ENCODE measurements at regions of chr4 and their contacts with region 1.

Region 1: DNA sequence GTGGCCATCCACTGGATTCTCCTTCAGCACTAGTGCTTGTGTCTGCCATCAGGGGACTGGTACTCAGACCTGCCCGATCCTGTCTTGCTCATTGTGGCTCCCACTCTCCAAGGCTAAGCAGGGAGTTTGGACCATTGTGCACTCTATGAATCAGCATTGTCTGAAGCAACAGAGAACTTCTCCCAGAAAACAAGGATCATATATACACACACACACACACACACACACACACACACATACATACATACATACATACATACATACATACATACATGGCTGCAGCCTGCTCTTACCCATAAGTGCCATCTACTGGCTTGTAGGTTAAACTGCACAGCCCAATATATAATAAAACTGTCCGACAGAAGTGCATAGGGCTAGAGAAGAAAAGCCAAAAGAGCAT is 345.3 kb upstream of the LCORL start:
- DNase-seq: no peak
- H3K4me3 ChIP-seq: no peak overlapping the region
- H3K27ac ChIP-seq: no peak overlapping the region
- H3K4me1 ChIP-seq: no peaks in the 10 kb centered on the region
- H3K27me3 ChIP-seq: no peaks in the 10 kb centered on the region
- CTCF ChIP-seq: peak; percentile 66

Region 2: DNA sequence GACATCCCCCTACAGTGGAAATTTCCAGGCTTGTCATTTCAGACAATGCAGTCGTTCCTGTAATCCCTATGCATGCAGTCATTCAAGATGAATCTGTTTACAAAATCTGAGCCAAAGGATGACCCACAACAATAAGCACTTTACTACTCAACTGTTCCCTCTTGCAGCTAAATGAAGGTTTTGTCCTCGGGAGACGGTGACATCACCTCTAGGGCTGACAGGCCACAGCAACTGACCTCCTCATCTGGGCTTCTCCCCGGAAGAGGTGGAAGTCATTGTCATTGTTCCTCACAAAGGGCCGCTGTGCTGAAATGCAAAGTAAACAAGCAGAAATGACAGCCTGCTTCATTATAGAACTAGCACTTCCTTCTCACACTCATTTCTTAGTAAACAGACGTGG is 822.7 kb before region 1 on chr4:
- CTCF ChIA-PET with region 1: no interaction called
- POLR2A ChIA-PET with region 1: no interaction called
- intact Hi-C with region 1: loop called (anchors 5 kb)
- DNase-seq: peak in 1 of 2 experiments; percentile 46
- H3K4me3 ChIP-seq: no peak overlapping the region
- H3K27ac ChIP-seq: no peak overlapping the region
- H3K4me1 ChIP-seq: 0 out of 2 replicates have a peak, but pooled peaks cover 3% of the 10 kb centered on the region
- H3K27me3 ChIP-seq: no peaks in the 10 kb centered on the region
- CTCF ChIP-seq: no peak

Region 3: GRCh38 chr4:17817020-17817419 is 549.9 kb before region 1 on chr4:
- CTCF ChIA-PET with region 1: no interaction called
- POLR2A ChIA-PET with region 1: no interaction called
- intact Hi-C with region 1: loop called (anchors 2 kb)
- DNase-seq: peak in 1 of 2 experiments; percentile 40
- H3K4me3 ChIP-seq: no peak overlapping the region
- H3K27ac ChIP-seq: no peak overlapping the region
- H3K4me1 ChIP-seq: peaks cover 14% of the 10 kb centered on the region
- H3K27me3 ChIP-seq: no peaks in the 10 kb centered on the region
- CTCF ChIP-seq: peak; percentile 63

Measured in PC-9 (cell line).